ENCODE measurements at regions of chr11 and their contacts with region 1.

Region 1: GRCh38 chr11:62645956-62646824 is at the start of gene GANAB:
- DNase-seq: peak; percentile 99
- ATAC-seq: peak; percentile 98
- H3K4me3 ChIP-seq: peak within 1 kb of the TSS; percentile 91 to 100 (median 96)
- H3K27ac ChIP-seq: peak within 1 kb of the TSS; percentile 96 to 99 (median 96)
- H3K4me1 ChIP-seq: peaks cover 29 to 30% of the 10 kb centered on the region in 2 donors
- H3K27me3 ChIP-seq: no peaks in the 10 kb centered on the region
- CTCF ChIP-seq: peak in 1 of 5 experiments; percentile 20
- POLR2A ChIP-seq: peak; percentile 81 to 92
- total RNA-seq, gene GANAB: 41.3 to 65.1 (median 59.5) TPM

Region 2: GRCh38 chr11:62621567-62622470 is 24.4 kb before region 1 on chr11 and contains the start of gene B3GAT3:
- in situ Hi-C with region 1: no loop called
- intact Hi-C with region 1: loop called (anchors 1 kb)
- DNase-seq: peak; percentile 97 to 99
- ATAC-seq: peak; percentile 95 to 97
- H3K4me3 ChIP-seq: peak within 1 kb of the TSS; percentile 65 to 96 (median 76)
- H3K27ac ChIP-seq: peak within 1 kb of the TSS; percentile 76 to 92 (median 82)
- H3K4me1 ChIP-seq: peaks cover 8 to 9% of the 10 kb centered on the region in 2 donors
- H3K27me3 ChIP-seq: no peaks in the 10 kb centered on the region
- CTCF ChIP-seq: peak in 2 of 5 experiments; percentile 10
- POLR2A ChIP-seq: peak; percentile 75 to 77
- total RNA-seq, gene B3GAT3: 4.4 to 21.4 (median 9.8) TPM

Region 3: GRCh38 chr11:62665075-62665598 is 18.9 kb after region 1 on chr11 and contains the starts of genes C11orf98 and CSKMT:
- in situ Hi-C with region 1: no loop called
- intact Hi-C with region 1: loop called (anchors 2 kb)
- DNase-seq: peak; percentile 91 to 94
- ATAC-seq: peak; percentile 90 to 95
- H3K4me3 ChIP-seq: peak within 1 kb of the TSS; percentile 68 to 96 (median 79)
- H3K27ac ChIP-seq: peak within 1 kb of the TSS; percentile 82 to 97 (median 88)
- H3K4me1 ChIP-seq: peaks cover 34 to 36% of the 10 kb centered on the region in 2 donors
- H3K27me3 ChIP-seq: no peaks in the 10 kb centered on the region
- CTCF ChIP-seq: no peak
- POLR2A ChIP-seq: peak; percentile 99
- total RNA-seq, gene C11orf98: 36.1 to 44.7 (median 41.3) TPM
- total RNA-seq, gene CSKMT: 1.7 to 4.5 (median 2.8) TPM

Measured in gastrocnemius medialis (tissue), 4 donors.